Tibial artery (tissue), 4 donors: ENCODE measurements at regions of chr15 and their contacts with region 1.

Region 1: DNA sequence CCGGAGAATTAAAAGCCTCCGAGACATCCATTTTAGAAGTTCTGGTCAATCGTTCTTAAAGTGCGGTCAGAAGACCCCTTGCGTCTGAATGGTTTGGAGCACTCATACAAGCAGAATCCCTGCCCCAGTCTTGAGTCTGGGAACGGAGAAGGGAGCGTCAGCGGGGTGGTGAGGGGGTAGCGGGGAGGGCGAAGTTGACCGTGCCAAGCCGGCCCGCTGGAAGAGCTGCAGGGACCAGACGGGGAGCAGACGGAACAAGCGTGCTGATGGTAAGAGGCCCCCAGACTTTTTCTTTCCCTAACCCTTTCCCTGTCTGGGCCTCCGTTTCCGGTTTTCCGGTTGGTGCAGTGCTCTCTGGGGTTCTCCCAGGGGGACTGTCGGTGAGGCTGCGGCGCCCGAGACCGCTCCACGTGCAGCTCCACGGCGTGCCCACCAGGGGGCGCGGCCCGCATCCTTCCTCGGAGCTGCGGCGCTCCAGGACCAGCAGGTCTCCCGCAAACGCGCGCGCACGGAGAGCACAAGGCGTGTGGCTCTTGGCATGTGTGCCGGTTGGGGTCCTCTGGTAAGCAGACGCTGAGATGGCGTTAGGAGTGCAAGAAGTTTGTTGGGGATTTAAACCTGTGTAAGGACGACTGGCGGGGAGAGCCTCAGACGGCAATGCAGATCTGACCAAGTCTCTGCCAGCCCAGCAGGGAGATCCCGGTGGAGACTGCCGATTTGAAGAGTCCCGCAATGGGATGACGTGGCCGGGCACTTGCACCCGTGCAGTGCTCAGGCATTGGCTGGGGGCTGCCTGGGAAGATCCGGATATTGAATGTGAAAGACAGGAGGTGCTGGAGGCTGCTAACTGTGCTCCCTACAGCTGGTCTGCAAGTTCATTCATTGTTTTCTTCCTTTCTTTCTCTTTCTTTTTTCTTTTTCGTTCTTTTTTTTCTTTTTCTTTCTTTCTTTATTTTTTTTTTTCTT is 19.2 kb upstream of the CORO2B start:
- DNase-seq: peak; percentile 60 to 87
- H3K4me3 ChIP-seq: peak overlapping the region; percentile 43 to 56
- H3K27ac ChIP-seq: peak overlapping the region in 1 of 2 donors; percentile 0
- H3K4me1 ChIP-seq: peaks cover 0 to 14% (median 9%) of the 10 kb centered on the region in 4 donors
- H3K27me3 ChIP-seq: peaks cover 0 to 19% of the 10 kb centered on the region in 2 donors
- CTCF ChIP-seq: peak; percentile 96

Region 2: DNA sequence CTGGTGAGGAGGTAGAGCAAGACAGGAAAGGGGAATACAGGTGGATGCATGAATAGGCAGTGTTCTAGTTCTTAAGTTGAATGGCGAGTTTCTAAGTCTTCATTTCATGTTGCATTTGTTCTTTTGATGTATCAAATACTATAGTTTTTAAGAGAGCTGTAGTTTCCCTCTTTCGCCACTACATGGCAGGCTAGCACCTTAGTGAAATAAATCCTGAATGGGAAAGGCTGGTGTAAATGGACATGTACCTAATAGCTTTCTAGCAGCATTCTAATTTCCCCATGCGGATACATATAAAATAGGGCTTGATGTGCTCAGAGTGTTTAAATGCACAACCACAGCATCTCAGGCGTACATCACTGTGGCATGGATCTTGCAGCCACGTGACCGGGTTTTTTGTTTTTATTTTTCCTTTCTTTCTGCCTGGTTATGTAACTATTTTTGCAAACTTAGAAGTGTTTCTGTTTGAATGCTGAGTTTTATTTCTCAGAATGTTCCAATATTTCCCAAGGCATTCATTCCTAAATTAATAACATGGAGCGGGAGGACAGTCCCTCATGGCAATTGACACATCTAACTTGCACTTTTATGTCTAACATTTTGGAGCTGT is 306.6 kb before region 1 on chr15:
- intact Hi-C with region 1: loop called (anchors 5 kb)
- DNase-seq: peak in 1 of 2 donors; percentile 44
- H3K4me3 ChIP-seq: no peak overlapping the region
- H3K27ac ChIP-seq: no peak overlapping the region
- H3K4me1 ChIP-seq: peaks cover 0 to 16% (median 12%) of the 10 kb centered on the region in 4 donors
- H3K27me3 ChIP-seq: no peaks in the 10 kb centered on the region
- CTCF ChIP-seq: peak; percentile 91 to 93

Region 3: GRCh38 chr15:68672781-68673205 is 113.2 kb after region 1 on chr15:
- intact Hi-C with region 1: loop called (anchors 5 kb)
- DNase-seq: peak in 1 of 2 donors; percentile 60
- H3K4me3 ChIP-seq: no peak overlapping the region
- H3K27ac ChIP-seq: no peak overlapping the region
- H3K4me1 ChIP-seq: no peaks in the 10 kb centered on the region
- H3K27me3 ChIP-seq: peaks cover 0 to 6% of the 10 kb centered on the region in 2 donors
- CTCF ChIP-seq: no peak

Region 4: DNA sequence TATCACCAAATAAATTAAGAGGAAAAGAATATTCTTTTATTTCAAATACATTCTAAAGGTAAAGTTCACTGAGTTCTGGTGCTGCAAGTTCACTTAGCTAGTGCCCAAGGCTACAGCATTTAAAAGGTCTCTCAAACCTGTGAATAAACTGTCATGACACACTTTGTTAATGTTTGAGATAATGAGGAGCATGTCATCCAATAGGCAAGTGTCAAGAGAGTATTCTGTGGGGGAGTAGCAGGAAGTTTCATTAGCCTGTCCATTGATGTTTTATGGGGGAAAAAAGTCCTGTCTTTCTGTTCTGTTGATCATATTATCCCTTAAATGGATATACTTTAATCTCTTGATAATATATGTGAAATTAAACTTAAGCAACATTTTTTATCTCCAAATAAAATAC is 374.7 kb after region 1 on chr15:
- intact Hi-C with region 1: no loop called
- DNase-seq: no peak
- H3K4me3 ChIP-seq: no peak overlapping the region
- H3K27ac ChIP-seq: no peak overlapping the region
- H3K4me1 ChIP-seq: no peaks in the 10 kb centered on the region
- H3K27me3 ChIP-seq: peaks cover 0 to 9% of the 10 kb centered on the region in 2 donors
- CTCF ChIP-seq: no peak